ENCODE measurements at regions of chr11 and their contacts with region 1.

Region 1: GRCh38 chr11:1050581-1051355 is 14.2 kb upstream of the MUC6 start:
- DNase-seq: peak; percentile 45 to 77
- H3K4me3 ChIP-seq: no peak overlapping the region
- H3K27ac ChIP-seq: no peak overlapping the region
- H3K4me1 ChIP-seq: no peaks in the 10 kb centered on the region
- H3K27me3 ChIP-seq: no peaks in the 10 kb centered on the region
- CTCF ChIP-seq: peak; percentile 83

Region 2: GRCh38 chr11:842370-843002 is 208.3 kb before region 1 on chr11 and contains the starts of genes POLR2L and TSPAN4:
- CTCF ChIA-PET with region 1: no interaction called
- POLR2A ChIA-PET with region 1: no interaction called
- intact Hi-C with region 1: loop called (anchors 2 kb)
- DNase-seq: peak; percentile 59 to 73
- H3K4me3 ChIP-seq: peak within 1 kb of the TSS; percentile 78
- H3K27ac ChIP-seq: peak within 1 kb of the TSS; percentile 67
- H3K4me1 ChIP-seq: peaks cover 20% of the 10 kb centered on the region
- H3K27me3 ChIP-seq: no peaks in the 10 kb centered on the region
- CTCF ChIP-seq: no peak
- total RNA-seq, gene POLR2L: 87.4 and 99.7 TPM in 2 replicates
- total RNA-seq, gene TSPAN4: 30.4 and 43.6 TPM in 2 replicates

Region 3: DNA sequence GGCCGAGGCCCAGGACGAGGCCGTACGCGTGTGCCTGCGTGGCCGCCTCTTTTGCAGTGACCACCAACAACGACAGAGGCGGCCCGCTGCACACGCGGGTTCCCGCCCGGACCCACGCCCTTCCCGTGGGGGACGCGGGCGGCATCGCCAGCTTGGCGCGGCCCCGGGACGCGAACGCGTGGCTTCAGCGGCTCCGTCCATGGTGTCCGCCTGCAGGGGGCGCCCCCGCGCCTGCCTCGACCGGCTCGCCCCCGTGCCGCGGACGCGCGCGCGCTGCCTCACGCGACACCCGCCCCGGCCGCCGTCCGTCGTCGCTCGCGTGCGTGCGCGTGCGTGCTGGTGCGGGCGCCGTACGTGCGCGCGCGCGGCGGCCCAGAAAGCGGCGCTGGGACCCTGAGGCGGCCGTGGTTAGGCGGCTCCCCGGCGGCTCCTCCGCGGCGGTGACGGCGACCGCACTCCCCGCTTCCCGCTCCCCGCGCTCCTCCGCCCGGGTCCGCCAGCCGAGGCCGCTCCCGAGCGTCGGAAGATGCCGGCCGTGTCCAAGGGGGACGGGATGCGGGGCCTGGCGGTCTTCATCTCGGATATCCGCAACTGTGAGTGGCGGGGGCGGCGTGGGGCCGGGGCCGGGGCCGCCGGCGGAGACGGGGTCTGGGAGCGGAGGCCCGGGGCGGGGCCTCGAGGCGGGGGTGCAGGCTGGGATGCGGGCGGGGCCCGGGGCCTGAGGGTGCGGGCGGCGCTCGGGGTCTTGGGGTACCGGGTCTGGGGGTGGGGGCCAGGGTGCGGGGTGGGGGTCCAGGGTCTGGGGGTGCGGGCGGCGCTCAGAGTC is 125.1 kb before region 1 on chr11 and contains the start of gene AP2A2:
- CTCF ChIA-PET with region 1: interaction called, 3 read pairs
- POLR2A ChIA-PET with region 1: no interaction called
- intact Hi-C with region 1: loop called (anchors 5 kb)
- DNase-seq: peak in 1 of 2 experiments; percentile 82
- H3K4me3 ChIP-seq: peak within 1 kb of the TSS; percentile 62
- H3K27ac ChIP-seq: no peak within 1 kb of the TSS
- H3K4me1 ChIP-seq: no peaks in the 10 kb centered on the region
- H3K27me3 ChIP-seq: no peaks in the 10 kb centered on the region
- CTCF ChIP-seq: peak; percentile 64
- total RNA-seq, gene AP2A2: 39.4 and 44.0 TPM in 2 replicates